SK-N-SH (cell line): ENCODE measurements at regions of chr11 and their contacts with region 1.

Region 1: GRCh38 chr11:119728651-119729580 is at the start of gene NECTIN1:
- DNase-seq: peak; percentile 96
- H3K4me3 ChIP-seq: peak within 1 kb of the TSS; percentile 84 to 87
- H3K27ac ChIP-seq: peak within 1 kb of the TSS; percentile 74 to 97
- H3K4me1 ChIP-seq: peaks cover 6 to 47% of the 10 kb centered on the region in 2 experiments; a peak in 2 of 4 replicates
- H3K27me3 ChIP-seq: no peaks in the 10 kb centered on the region
- CTCF ChIP-seq: peak; percentile 93
- EP300 ChIP-seq: no peak
- RAD21 ChIP-seq: peak; percentile 78
- polyA plus RNA-seq, gene NECTIN1: 6.7 and 9.1 TPM in 2 replicates

Region 2: DNA sequence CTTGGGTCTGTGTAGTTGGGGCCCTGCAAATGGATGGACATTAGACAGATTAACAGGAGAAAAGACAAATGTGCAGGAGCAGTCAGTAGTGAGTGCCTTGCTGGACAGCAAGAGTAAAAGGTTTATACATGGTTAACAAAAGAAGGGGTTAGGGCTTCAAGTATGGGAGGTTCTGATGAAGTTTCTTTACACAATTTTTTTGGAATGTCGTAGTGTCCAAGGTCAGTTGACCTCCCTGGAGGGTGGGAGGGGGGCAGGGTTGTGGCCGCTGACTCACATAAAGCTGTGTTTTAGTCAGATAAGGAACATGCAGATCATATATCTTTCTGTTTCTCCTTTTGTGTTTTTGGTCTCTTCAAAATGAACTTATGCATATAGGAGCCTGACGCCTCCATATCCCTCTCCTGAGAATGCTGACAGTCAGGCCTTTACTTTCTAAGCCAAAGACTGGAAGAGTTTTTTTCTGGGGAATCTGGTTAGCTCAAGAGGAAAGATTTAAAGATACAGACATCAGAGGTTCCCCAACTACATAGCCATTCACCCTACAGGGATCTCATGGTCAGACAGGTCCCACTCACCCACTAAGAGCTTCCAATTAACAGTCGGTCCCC is 134.2 kb before region 1 on chr11:
- CTCF ChIA-PET with region 1: no interaction called
- POLR2A ChIA-PET with region 1: no interaction called
- DNase-seq: no peak
- H3K4me3 ChIP-seq: peak overlapping the region in 1 of 2 experiments; percentile 23; a peak in 1 of 4 replicates
- H3K27ac ChIP-seq: peak overlapping the region in 1 of 2 experiments; percentile 74; a peak in 2 of 4 replicates
- H3K4me1 ChIP-seq: peaks cover 0 to 13% of the 10 kb centered on the region in 2 experiments; a peak in 3 of 4 replicates
- H3K27me3 ChIP-seq: no peaks in the 10 kb centered on the region
- CTCF ChIP-seq: no peak
- EP300 ChIP-seq: peak in 1 of 2 experiments; percentile 82; a peak in 1 of 4 replicates
- RAD21 ChIP-seq: no peak

Region 3: DNA sequence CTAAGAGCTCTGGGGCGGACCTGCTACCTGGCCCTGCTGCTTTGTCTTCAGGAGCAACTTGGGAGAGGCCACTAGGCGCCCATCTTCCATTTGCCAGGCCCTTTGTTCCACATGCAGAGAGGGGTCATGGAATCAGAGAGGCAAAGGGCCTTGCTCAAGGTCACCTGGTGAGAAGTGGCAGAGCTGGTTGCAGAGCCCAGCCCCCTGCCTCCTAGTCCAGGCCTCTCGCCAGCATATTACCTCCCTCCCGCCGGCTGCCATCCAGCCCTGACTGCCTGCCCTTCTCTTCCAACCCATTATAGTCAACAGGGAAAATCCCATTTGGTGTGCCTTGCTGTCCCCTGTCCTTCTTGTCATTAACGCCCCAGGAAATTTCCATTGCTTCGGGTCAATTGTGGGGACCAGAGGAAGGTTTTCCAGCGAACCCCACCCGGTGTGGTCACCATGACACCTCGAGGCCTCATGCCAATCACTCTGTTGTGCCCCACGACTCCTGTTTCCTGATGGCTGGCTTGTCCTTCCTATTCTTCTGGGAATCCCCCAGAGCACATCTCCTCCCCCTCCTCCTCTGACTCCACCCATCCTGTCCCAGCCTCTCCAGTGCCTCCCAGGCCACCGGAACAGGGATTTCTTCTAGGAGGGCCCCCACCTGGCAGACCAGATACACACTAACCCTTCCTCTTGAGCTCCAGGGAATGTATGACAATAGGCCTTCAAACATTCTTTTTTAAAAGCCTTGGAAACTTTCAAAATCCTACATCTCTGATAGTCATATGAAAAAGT is 76.9 kb before region 1 on chr11:
- CTCF ChIA-PET with region 1: interaction called, 12 read pairs
- POLR2A ChIA-PET with region 1: no interaction called
- DNase-seq: no peak
- H3K4me3 ChIP-seq: no peak overlapping the region
- H3K27ac ChIP-seq: no peak overlapping the region
- H3K4me1 ChIP-seq: peaks cover 0 to 3% of the 10 kb centered on the region in 2 experiments; a peak in 2 of 4 replicates
- H3K27me3 ChIP-seq: no peaks in the 10 kb centered on the region
- CTCF ChIP-seq: no peak
- EP300 ChIP-seq: no peak
- RAD21 ChIP-seq: no peak

Region 4: GRCh38 chr11:119684361-119685110 is 44.4 kb before region 1 on chr11:
- CTCF ChIA-PET with region 1: interaction called, 14 read pairs
- POLR2A ChIA-PET with region 1: interaction called, 3 read pairs
- DNase-seq: peak; percentile 69
- H3K4me3 ChIP-seq: no peak overlapping the region
- H3K27ac ChIP-seq: peak overlapping the region; percentile 45 to 97
- H3K4me1 ChIP-seq: peaks cover 15 to 98% of the 10 kb centered on the region in 2 experiments
- H3K27me3 ChIP-seq: no peaks in the 10 kb centered on the region
- CTCF ChIP-seq: no peak
- EP300 ChIP-seq: no peak
- RAD21 ChIP-seq: no peak; the same call in 1 of the 2 replicates

Region 5: DNA sequence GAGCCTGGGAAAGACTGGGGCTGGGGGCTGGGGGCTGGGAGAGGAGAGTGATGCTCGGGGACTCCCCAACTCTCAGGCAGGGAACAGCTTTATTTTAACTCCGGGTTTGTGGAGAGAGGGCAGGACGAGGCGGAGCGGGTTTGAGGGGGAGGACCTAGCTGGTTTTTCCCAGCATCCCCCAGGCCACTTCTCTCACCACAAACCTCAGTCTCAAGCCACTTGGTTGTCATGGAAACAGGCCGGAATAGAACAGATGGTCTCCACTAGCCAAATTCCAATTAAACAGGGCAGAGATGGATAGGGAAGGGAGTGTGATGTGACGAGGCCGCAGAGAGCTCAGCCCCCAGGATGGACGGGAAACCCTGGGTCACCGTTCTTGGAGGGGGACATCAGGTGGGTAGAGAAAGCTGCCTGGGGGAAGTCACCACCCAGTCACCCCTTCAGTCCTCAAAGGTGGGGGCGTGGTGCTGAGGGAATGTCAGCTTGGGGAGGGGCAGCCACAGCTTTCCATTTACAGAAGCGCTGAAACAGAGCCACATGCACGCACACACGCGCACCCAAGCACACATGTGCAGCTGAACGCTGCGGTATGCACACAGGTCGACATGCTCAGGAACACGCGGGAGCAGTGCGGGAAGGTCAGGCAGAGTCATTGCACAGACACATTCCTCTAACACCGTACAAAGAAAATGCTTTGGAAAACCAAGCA is 19.1 kb before region 1 on chr11:
- CTCF ChIA-PET with region 1: interaction called, 77 read pairs
- POLR2A ChIA-PET with region 1: interaction called, 6 read pairs
- DNase-seq: peak; percentile 92
- H3K4me3 ChIP-seq: no peak overlapping the region; a peak in 1 of 4 replicates
- H3K27ac ChIP-seq: peak overlapping the region in 1 of 2 experiments; percentile 83; a peak in 2 of 4 replicates
- H3K4me1 ChIP-seq: peaks cover 2 to 61% of the 10 kb centered on the region in 2 experiments; a peak in 2 of 4 replicates
- H3K27me3 ChIP-seq: no peaks in the 10 kb centered on the region
- CTCF ChIP-seq: no peak
- EP300 ChIP-seq: no peak; a peak in 1 of 4 replicates
- RAD21 ChIP-seq: no peak

Region 6: DNA sequence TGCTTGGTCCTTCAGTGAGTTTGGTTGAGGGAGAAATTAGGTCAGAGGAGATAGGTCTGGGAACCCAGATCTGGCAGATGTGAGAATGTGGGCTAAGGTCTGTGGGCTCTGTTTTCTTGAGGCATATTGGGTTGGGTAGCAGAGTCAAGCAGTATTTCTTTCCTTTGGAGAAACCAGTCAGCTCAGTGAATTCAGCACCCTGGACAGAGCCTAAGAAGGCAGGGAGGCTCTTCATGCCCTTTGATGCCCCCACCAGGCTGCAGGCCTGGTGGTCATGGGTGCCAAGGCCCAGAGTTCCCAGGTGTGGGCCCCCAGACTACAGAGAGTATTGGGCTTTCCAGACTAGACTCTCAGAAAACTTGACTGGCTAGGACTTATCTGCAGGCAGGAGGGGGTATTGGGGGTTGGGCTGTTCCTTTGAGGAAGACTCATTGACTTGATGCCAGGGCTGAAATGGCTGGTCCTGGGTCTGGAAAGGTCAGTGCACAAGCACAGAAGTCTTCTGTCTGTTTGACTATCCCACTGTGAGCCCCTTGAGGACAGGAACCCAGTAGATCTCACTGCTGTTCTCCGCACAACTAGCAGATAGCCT is 45.4 kb after region 1 on chr11:
- CTCF ChIA-PET with region 1: interaction called, 23 read pairs
- POLR2A ChIA-PET with region 1: interaction called, 28 read pairs
- DNase-seq: no peak
- H3K4me3 ChIP-seq: no peak overlapping the region
- H3K27ac ChIP-seq: peak overlapping the region in 1 of 2 experiments; percentile 89; a peak in 1 of 4 replicates
- H3K4me1 ChIP-seq: peaks cover 0 to 78% of the 10 kb centered on the region in 2 experiments; a peak in 2 of 4 replicates
- H3K27me3 ChIP-seq: no peaks in the 10 kb centered on the region
- CTCF ChIP-seq: no peak
- EP300 ChIP-seq: no peak
- RAD21 ChIP-seq: no peak

Region 7: DNA sequence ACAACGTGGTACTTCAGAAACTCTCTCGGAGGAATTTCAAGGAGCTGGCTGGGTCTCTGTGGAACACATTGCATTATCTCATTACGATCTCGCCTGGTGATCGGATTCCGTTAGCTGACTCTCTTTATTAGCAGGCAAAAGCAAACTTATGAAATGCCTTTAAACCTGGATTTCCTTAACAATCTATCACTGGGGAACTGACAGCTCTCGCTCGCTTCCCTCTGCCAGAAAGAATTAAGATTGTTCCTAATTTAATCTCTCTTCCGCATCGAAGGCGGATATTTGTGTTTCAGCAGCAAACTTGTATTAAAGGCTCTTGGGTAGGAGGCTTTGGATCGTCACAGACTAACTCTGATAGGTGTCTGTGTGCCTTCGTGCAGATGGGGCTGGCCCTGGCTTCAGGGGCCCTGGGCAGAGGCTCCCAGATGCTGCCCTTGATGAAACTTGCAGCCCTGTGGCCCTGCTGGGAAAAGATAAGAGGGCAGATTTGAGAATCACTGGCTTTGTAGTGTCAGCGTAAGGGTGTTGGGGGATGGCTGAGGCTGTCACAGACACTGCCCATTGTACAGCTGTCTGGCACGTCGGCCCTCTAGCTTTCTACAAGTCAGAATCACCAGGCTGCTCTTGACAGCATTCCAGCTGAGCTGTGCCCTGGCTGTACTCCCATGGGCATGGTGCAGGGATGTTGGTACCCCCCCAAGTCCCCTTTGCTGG is 162.3 kb after region 1 on chr11:
- CTCF ChIA-PET with region 1: interaction called, 28 read pairs
- POLR2A ChIA-PET with region 1: interaction called, 32 read pairs
- DNase-seq: peak; percentile 74
- H3K4me3 ChIP-seq: no peak overlapping the region
- H3K27ac ChIP-seq: peak overlapping the region in 1 of 2 experiments; percentile 100; a peak in 2 of 4 replicates
- H3K4me1 ChIP-seq: peaks cover 0 to 80% of the 10 kb centered on the region in 2 experiments; a peak in 2 of 4 replicates
- H3K27me3 ChIP-seq: peaks cover 17% of the 10 kb centered on the region
- CTCF ChIP-seq: no peak
- EP300 ChIP-seq: peak in 1 of 2 experiments; percentile 96; a peak in 2 of 4 replicates
- RAD21 ChIP-seq: peak; percentile 38; the same call in 1 of the 2 replicates